K562 (cell line): ENCODE measurements at regions of chr2 and their contacts with region 1.

Region 1: GRCh38 chr2:225660262-225661131 is 261.0 kb downstream of the NYAP2 start:
- DNase-seq: peak; percentile 51 to 75 (median 60)
- ATAC-seq: peak; percentile 91
- H3K4me3 ChIP-seq: no peak overlapping the region
- H3K27ac ChIP-seq: no peak overlapping the region
- H3K4me1 ChIP-seq: no peaks in the 10 kb centered on the region
- H3K27me3 ChIP-seq: no peaks in the 10 kb centered on the region
- CTCF ChIP-seq: peak; percentile 62 to 77 (median 64)
- EP300 ChIP-seq: no peak
- POLR2A ChIP-seq: no peak
- RAD21 ChIP-seq: peak; percentile 77 to 87

Region 2: GRCh38 chr2:225122583-225123486 is 537.7 kb before region 1 on chr2:
- CTCF ChIA-PET with region 1: interaction called, 4 read pairs
- POLR2A ChIA-PET with region 1: no interaction called
- in situ Hi-C with region 1: no loop called
- intact Hi-C with region 1: loop called (anchors 2 kb)
- DNase-seq: peak in 1 of 4 experiments; percentile 8
- ATAC-seq: no peak
- H3K4me3 ChIP-seq: no peak overlapping the region
- H3K27ac ChIP-seq: no peak overlapping the region
- H3K4me1 ChIP-seq: no peaks in the 10 kb centered on the region
- H3K27me3 ChIP-seq: no peaks in the 10 kb centered on the region
- CTCF ChIP-seq: peak in 1 of 3 experiments; percentile 33; a peak in 1 of 6 replicates
- EP300 ChIP-seq: no peak
- POLR2A ChIP-seq: no peak
- RAD21 ChIP-seq: peak in 1 of 2 experiments; percentile 54; a peak in 3 of 4 replicates

Region 3: GRCh38 chr2:225282858-225283710 is 377.4 kb before region 1 on chr2:
- CTCF ChIA-PET with region 1: no interaction called
- POLR2A ChIA-PET with region 1: no interaction called
- in situ Hi-C with region 1: no loop called
- intact Hi-C with region 1: loop called (anchors 2 kb)
- DNase-seq: peak in 3 of 4 experiments; percentile 8 to 17 (median 8)
- ATAC-seq: no peak
- H3K4me3 ChIP-seq: no peak overlapping the region
- H3K27ac ChIP-seq: no peak overlapping the region
- H3K4me1 ChIP-seq: no peaks in the 10 kb centered on the region
- H3K27me3 ChIP-seq: no peaks in the 10 kb centered on the region
- CTCF ChIP-seq: peak; percentile 36 to 47 (median 45); a peak in 4 of 6 replicates
- EP300 ChIP-seq: no peak
- POLR2A ChIP-seq: no peak
- RAD21 ChIP-seq: peak; percentile 48 to 68

Region 4: DNA sequence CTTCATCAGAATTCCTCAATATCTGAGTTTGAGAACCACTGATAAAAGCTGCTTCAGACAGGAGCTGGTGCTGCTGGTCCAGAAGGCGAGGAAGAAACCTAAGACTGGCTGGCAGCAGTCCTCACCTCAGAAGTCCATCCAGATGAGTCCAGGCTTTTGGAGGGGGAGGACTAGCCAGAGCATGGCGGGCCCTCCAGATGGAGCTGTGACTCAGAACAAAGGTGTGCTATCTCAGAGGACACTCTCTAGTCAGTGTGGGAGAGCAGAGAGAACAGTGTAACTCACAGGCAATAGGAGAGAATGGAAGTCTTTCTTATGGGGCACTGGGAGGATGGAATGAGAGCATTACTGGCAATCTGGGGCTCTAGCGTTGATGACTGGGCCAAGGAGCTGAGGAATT is 69.6 kb before region 1 on chr2:
- CTCF ChIA-PET with region 1: no interaction called
- POLR2A ChIA-PET with region 1: no interaction called
- in situ Hi-C with region 1: no loop called
- intact Hi-C with region 1: loop called (anchors 1 kb)
- DNase-seq: peak in 2 of 4 experiments; percentile 13 to 24
- ATAC-seq: peak; percentile 89
- H3K4me3 ChIP-seq: no peak overlapping the region
- H3K27ac ChIP-seq: no peak overlapping the region
- H3K4me1 ChIP-seq: no peaks in the 10 kb centered on the region
- H3K27me3 ChIP-seq: no peaks in the 10 kb centered on the region
- CTCF ChIP-seq: 0 out of 6 replicates have a peak, but pooled peaks of 1 of the 3 experiments have one; percentile 13
- EP300 ChIP-seq: no peak
- POLR2A ChIP-seq: no peak
- RAD21 ChIP-seq: peak in 1 of 2 experiments; percentile 47; a peak in 2 of 4 replicates

Region 5: GRCh38 chr2:225948903-225949302 is 288.4 kb after region 1 on chr2:
- CTCF ChIA-PET with region 1: no interaction called
- POLR2A ChIA-PET with region 1: no interaction called
- in situ Hi-C with region 1: no loop called
- intact Hi-C with region 1: no loop called
- DNase-seq: no peak
- ATAC-seq: no peak
- H3K4me3 ChIP-seq: no peak overlapping the region
- H3K27ac ChIP-seq: no peak overlapping the region
- H3K4me1 ChIP-seq: no peaks in the 10 kb centered on the region
- H3K27me3 ChIP-seq: no peaks in the 10 kb centered on the region
- CTCF ChIP-seq: no peak
- EP300 ChIP-seq: no peak
- POLR2A ChIP-seq: no peak
- RAD21 ChIP-seq: no peak

Region 6: DNA sequence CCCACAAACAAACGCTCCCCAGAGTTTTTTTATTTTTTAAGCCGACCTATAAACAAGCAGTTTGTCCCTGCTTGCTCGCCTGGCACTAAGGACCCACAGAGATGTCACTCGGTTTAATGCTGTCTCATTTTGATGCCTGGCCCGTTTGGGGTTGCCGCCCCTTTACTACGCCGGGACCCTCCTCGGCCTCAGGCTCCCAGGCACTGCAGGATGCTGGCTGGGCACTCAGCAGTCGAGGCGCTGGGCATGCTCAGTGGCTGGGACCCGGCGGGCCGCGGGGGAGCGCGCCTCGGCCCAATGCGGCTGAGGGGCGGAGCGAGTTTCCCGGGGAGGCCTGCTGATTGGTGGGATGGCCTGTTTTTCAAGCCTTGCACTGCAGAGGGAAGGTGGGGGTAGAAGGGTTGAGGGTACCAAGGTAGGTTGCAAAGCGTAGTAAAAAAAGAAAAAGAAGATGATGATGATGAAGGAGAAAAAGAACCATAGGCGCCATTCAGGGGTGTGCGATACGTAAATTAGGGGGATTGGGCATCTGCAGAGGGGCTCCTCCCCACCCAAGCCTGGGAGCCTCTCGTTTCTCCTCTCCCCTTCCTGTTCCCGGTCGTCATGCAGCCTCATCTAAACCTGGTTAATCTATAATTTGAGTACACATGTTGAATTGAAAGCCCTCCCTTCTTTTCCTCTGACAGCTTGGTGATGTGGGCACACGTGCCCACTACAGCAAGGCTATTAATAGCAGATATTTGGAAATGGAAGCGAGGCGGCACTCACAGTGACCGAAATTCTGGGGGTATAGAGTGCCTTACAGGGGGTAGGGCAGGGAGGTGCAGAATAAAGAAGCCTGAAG is 1140.7 kb after region 1 on chr2:
- CTCF ChIA-PET with region 1: interaction called, 5 read pairs
- POLR2A ChIA-PET with region 1: no interaction called
- in situ Hi-C with region 1: loop called (anchors 25 kb)
- intact Hi-C with region 1: no loop called
- DNase-seq: peak in 1 of 4 experiments; percentile 15
- ATAC-seq: no peak
- H3K4me3 ChIP-seq: no peak overlapping the region
- H3K27ac ChIP-seq: no peak overlapping the region
- H3K4me1 ChIP-seq: peaks cover 0 to 18% of the 10 kb centered on the region in 2 experiments; a peak in 2 of 5 replicates
- H3K27me3 ChIP-seq: no peaks in the 10 kb centered on the region; a peak in 1 of 5 replicates
- CTCF ChIP-seq: no peak
- EP300 ChIP-seq: no peak
- POLR2A ChIP-seq: no peak
- RAD21 ChIP-seq: no peak